ENCODE measurements at regions of chr2 and their contacts with region 1.

Region 1: GRCh38 chr2:159026170-159026569 is 57.7 kb downstream of the TANC1 start:
- DNase-seq: no peak
- H3K4me3 ChIP-seq: no peak overlapping the region
- H3K27ac ChIP-seq: no peak overlapping the region
- H3K4me1 ChIP-seq: peaks cover 8 to 24% (median 14%) of the 10 kb centered on the region in 6 donors
- H3K27me3 ChIP-seq: no peaks in the 10 kb centered on the region
- CTCF ChIP-seq: no peak
- POLR2A ChIP-seq: no peak

Region 2: DNA sequence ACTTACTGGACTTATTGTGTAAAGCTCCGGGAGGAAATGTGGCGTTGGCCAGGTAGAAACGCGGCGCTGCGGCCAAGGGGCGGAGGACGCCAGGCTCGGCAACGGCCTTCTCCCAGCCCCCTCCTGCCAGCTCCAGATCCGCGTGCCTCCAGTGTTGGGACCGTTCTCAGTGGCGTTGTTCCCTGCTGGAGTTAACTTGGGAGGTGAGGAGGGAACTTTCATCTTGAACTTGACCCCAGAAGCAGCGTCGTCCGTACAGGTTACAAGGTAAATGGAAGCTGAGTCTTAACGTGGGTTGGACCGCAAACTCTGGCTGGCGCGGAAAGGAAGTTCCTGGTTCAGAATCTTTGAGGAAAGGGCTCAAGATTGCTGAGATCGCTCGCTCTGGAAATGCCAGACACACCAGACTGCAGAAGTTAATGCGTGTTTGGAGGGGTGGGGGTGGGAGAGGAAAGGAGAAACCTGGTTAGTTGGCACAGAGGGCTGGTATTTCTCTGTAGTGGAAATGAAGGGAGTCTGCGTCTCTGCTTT is 56.4 kb before region 1 on chr2:
- intact Hi-C with region 1: loop called (anchors 10 kb)
- DNase-seq: no peak
- H3K4me3 ChIP-seq: peak overlapping the region; percentile 58 to 80 (median 70)
- H3K27ac ChIP-seq: peak overlapping the region; percentile 51 to 85 (median 80)
- H3K4me1 ChIP-seq: peaks cover 0 to 48% (median 38%) of the 10 kb centered on the region in 6 donors
- H3K27me3 ChIP-seq: peaks cover 0 to 42% (median 17%) of the 10 kb centered on the region in 7 donors
- CTCF ChIP-seq: no peak
- POLR2A ChIP-seq: no peak

Measured in spleen (tissue), 13 donors.